HepG2 (cell line): ENCODE measurements at regions of chr16 and their contacts with region 1.

Region 1: DNA sequence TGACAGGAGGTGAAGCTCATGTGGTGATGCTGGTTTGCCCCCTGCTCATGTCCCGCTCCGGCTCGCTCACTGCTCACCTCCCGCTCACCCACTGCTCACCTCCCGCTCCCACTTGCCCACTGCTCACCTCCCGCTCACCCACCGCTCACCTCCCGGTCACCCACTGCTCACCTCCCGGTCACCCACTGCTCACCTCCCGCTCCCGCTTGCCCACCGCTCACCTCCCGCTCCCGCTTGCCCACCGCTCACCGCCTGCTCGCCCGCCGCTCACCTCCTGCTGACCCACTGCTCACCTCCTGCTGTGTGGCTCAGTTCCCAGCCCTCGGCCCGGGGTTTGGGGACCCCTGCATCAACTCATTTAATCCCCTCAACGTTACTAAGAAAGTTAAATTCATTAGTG is 39.1 kb upstream of the SHISA9 start:
- DNase-seq: no peak
- ATAC-seq: no peak
- H3K4me3 ChIP-seq: no peak overlapping the region
- H3K27ac ChIP-seq: no peak overlapping the region
- H3K4me1 ChIP-seq: peaks cover 7% of the 10 kb centered on the region
- H3K27me3 ChIP-seq: peaks cover 0 to 10% of the 10 kb centered on the region in 2 experiments; a peak in 3 of 5 replicates
- CTCF ChIP-seq: no peak
- EP300 ChIP-seq: no peak
- POLR2A ChIP-seq: no peak
- RAD21 ChIP-seq: no peak

Region 2: GRCh38 chr16:13289515-13289914 is 427.2 kb after region 1 on chr16:
- CTCF ChIA-PET with region 1: no interaction called
- POLR2A ChIA-PET with region 1: no interaction called
- in situ Hi-C with region 1: no loop called
- intact Hi-C with region 1: loop called (anchors 5 kb)
- DNase-seq: no peak
- ATAC-seq: no peak
- H3K4me3 ChIP-seq: no peak overlapping the region
- H3K27ac ChIP-seq: no peak overlapping the region
- H3K4me1 ChIP-seq: no peaks in the 10 kb centered on the region
- H3K27me3 ChIP-seq: no peaks in the 10 kb centered on the region
- CTCF ChIP-seq: no peak
- EP300 ChIP-seq: no peak
- POLR2A ChIP-seq: no peak
- RAD21 ChIP-seq: no peak